ENCODE measurements at regions of chr3 and their contacts with region 1.

Region 1: DNA sequence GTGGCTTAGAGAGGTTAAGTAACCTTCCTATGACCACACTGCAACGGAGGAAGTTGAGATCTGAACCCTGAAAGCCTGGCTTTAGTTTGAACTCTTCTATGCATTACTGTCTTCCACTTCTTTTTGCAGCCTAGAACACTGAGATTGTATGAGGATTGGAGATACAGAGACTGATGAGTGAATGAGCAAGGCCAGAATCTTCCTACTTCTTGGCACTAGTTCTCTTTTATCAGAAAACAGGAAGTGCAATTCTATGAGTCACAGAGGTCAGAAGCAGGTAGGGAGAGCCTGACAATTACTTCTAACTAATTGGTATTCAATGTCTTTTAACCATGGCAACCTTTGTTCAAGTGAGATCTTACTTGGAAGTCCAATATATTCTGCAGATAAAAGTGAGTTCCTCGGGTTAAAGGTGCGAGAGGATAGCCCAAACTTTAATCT is 219.0 kb downstream of the SHQ1 start:
- DNase-seq: no peak
- H3K4me3 Mint-ChIP-seq: peak overlapping the region; percentile 5
- H3K27ac Mint-ChIP-seq: peak overlapping the region; percentile 86
- H3K4me1 Mint-ChIP-seq: peaks cover 58% of the 10 kb centered on the region
- H3K27me3 Mint-ChIP-seq: no peaks in the 10 kb centered on the region

Region 2: GRCh38 chr3:71984843-71985613 is 644.2 kb before region 1 on chr3:
- intact Hi-C with region 1: loop called (anchors 10 kb)
- DNase-seq: no peak
- H3K4me3 Mint-ChIP-seq: peak overlapping the region; percentile 49
- H3K27ac Mint-ChIP-seq: peak overlapping the region; percentile 74
- H3K4me1 Mint-ChIP-seq: peaks cover 45% of the 10 kb centered on the region
- H3K27me3 Mint-ChIP-seq: no peaks in the 10 kb centered on the region

Region 3: GRCh38 chr3:72375237-72376076 is 253.8 kb before region 1 on chr3:
- intact Hi-C with region 1: loop called (anchors 2 kb)
- DNase-seq: no peak
- H3K4me3 Mint-ChIP-seq: peak overlapping the region; percentile 54
- H3K27ac Mint-ChIP-seq: peak overlapping the region; percentile 86
- H3K4me1 Mint-ChIP-seq: peaks cover 61% of the 10 kb centered on the region
- H3K27me3 Mint-ChIP-seq: no peaks in the 10 kb centered on the region

Region 4: GRCh38 chr3:72447059-72447946 is 181.9 kb before region 1 on chr3:
- intact Hi-C with region 1: loop called (anchors 2 kb)
- DNase-seq: peak; percentile 92
- H3K4me3 Mint-ChIP-seq: peak overlapping the region; percentile 66
- H3K27ac Mint-ChIP-seq: peak overlapping the region; percentile 60
- H3K4me1 Mint-ChIP-seq: peaks cover 52% of the 10 kb centered on the region
- H3K27me3 Mint-ChIP-seq: no peaks in the 10 kb centered on the region

Region 5: DNA sequence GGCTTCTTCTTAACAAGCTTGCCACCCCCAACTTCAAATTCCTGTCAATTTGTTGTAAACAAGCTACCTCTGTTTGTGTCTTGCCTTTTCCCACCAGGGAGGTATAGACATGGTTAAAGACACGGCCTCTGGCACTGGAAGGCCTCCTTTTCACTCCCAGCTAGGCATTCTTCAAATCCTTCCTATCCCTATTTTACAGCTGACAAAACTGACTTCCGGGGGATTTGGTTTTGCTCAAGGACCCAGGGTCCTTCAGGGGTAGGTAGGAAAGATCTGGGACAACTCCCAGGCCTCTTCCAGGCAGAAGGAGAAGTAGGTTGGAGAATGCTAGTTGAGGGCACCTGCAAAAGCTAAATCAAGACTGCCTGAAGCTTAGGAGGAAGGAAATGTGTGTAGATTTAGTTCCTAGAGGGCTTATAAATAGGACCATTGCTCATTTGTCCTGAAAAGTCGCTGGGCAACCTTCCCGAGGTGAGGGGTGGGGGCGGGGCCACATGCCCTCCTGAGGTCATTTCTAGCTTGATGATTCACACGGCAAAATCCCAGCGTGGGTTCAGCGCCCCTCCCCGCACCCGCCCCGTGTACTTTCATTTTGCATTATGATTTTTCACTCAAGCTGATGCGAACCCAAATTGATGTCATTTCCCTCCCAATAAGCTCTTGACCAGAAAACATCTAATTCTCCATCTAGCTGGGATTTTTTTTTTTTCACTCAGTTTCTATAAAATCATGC is 146.5 kb before region 1 on chr3:
- intact Hi-C with region 1: loop called (anchors 1 kb)
- DNase-seq: peak; percentile 63
- H3K4me3 Mint-ChIP-seq: peak overlapping the region; percentile 61
- H3K27ac Mint-ChIP-seq: peak overlapping the region; percentile 90
- H3K4me1 Mint-ChIP-seq: peaks cover 76% of the 10 kb centered on the region
- H3K27me3 Mint-ChIP-seq: no peaks in the 10 kb centered on the region

Region 6: DNA sequence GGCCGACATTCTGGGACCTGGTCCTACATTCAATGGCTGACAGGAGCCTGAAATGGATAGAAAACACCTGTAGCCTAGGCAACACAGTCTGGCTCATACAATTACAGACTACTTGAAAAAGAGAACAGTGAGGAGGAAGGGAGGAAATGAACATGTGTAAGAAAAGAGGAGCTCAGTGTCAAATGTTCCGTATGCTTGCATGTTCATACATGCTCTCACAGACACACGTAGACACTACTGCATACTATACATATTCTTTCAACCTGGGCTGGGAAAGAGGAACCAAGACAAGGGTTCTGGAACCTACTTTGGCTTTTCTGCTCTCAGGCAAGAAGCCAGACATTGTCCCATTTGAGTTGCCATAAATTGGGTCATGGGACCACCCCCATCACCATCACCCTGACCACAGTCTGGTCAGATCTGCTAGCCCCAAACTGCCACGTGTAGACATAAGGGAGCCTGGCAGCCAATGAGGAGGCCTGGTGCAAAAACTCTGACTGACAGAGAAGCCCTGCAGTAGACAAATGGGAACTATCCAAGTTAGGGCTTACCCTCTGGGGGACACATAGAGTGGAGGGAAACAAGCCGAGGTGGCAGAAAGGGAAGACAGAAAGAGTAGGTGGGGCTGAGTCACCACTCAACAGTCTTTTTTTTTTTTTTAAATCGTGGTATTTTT is 91.0 kb before region 1 on chr3:
- intact Hi-C with region 1: loop called (anchors 5 kb)
- DNase-seq: no peak
- H3K4me3 Mint-ChIP-seq: no peak overlapping the region
- H3K27ac Mint-ChIP-seq: peak overlapping the region; percentile 60
- H3K4me1 Mint-ChIP-seq: peaks cover 38% of the 10 kb centered on the region
- H3K27me3 Mint-ChIP-seq: no peaks in the 10 kb centered on the region

Region 7: DNA sequence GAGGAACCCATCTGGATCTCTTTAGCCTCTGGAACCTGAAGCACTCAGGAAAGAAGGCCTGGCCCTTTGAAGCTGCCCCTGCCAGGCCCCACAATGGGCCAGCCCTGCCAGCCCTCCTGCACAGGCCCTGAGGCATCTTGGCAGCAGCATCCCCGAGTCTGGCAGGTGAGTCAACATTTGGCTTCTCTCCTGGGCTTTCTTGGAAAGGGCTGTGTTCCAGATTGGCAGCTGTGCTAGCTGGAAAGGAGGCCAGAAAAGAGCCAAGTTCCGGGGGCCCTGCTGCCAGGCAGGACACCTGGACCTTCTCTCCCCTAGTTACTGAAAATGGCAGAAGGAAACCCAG is 31.9 kb after region 1 on chr3:
- intact Hi-C with region 1: no loop called
- DNase-seq: no peak
- H3K4me3 Mint-ChIP-seq: no peak overlapping the region
- H3K27ac Mint-ChIP-seq: no peak overlapping the region
- H3K4me1 Mint-ChIP-seq: peaks cover 12% of the 10 kb centered on the region
- H3K27me3 Mint-ChIP-seq: no peaks in the 10 kb centered on the region

Region 8: GRCh38 chr3:72847751-72848702 is 218.8 kb after region 1 on chr3 and contains the start of gene SHQ1:
- intact Hi-C with region 1: loop called (anchors 1 kb)
- DNase-seq: peak; percentile 91
- H3K4me3 Mint-ChIP-seq: peak within 1 kb of the TSS; percentile 99
- H3K27ac Mint-ChIP-seq: peak within 1 kb of the TSS; percentile 77
- H3K4me1 Mint-ChIP-seq: peaks cover 54% of the 10 kb centered on the region
- H3K27me3 Mint-ChIP-seq: no peaks in the 10 kb centered on the region
- total RNA-seq, gene SHQ1: 29.0 and 31.2 TPM in 2 replicates

Measured in activated T-helper 2 cell treated with anti-CD3 and anti-CD28 coated beads, Interferon-gamma antibody, Interleukin-2, Interleukin-4, amounts not matched to agents 10 μg/mL and 5 μg/mL and 100 μg/mL, durations not matched to agents 14 hours and 24 hours and 36 hours (primary cell).